ENCODE measurements at regions of chr10 and their contacts with region 1.

Region 1: GRCh38 chr10:112949875-112950507 is at the start of gene TCF7L2:
- DNase-seq: peak; percentile 97 to 98 (median 97)
- ATAC-seq: peak; percentile 93 to 96 (median 95)
- H3K4me3 ChIP-seq: peak within 1 kb of the TSS; percentile 61 to 91 (median 73)
- H3K27ac ChIP-seq: peak within 1 kb of the TSS; percentile 82 to 97 (median 90)
- H3K4me1 ChIP-seq: peaks cover 0 to 39% (median 26%) of the 10 kb centered on the region in 12 donors
- H3K27me3 ChIP-seq: no peaks in the 10 kb centered on the region
- CTCF ChIP-seq: no peak
- POLR2A ChIP-seq: peak in 1 of 2 donors; percentile 75
- total RNA-seq, gene TCF7L2: 5.9 to 17.5 (median 11.1) TPM

Region 2: GRCh38 chr10:112852306-112852705 is 97.7 kb before region 1 on chr10:
- intact Hi-C with region 1: no loop called
- DNase-seq: peak in 4 of 5 donors; percentile 26 to 57 (median 37)
- ATAC-seq: peak; percentile 42 to 78 (median 58)
- H3K4me3 ChIP-seq: no peak overlapping the region
- H3K27ac ChIP-seq: no peak overlapping the region
- H3K4me1 ChIP-seq: peaks cover 0 to 21% (median 0%) of the 10 kb centered on the region in 12 donors
- H3K27me3 ChIP-seq: no peaks in the 10 kb centered on the region
- CTCF ChIP-seq: no peak
- POLR2A ChIP-seq: no peak

Region 3: DNA sequence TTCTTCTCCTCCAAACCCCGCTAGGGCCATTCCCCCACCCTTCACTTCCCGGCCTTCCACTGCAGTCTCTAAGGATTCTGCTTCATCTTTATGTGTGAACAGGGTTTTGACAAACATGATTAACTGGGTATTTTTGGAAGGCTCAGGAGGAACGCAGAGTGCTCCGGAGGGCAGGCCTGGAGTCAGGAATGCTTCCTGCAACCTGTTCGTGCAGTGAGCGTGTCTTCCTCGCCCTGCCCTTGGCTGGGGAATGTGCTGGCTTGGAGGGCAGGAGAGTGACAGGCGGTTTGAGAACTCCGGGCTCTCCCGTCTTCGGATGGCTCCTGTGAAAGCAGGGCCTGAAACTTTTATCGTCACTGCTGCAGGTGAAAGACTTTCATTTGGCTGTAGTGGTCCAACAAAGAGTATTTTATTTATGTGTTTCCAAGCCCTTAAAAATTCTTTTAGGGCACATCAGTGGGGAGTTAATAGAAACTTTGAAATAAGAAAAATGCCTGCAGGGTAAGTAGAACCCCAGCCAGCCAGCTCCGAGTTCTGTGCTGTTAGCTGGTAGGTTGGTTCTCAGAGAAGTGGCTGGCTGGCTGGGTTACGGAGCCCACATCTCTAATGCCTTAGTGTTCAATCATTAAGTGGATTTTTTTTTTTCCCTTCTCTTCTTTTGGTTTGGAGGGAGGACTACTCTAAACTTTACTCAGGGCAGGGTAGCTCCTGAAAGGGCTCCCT is 51.0 kb after region 1 on chr10:
- intact Hi-C with region 1: loop called in 1 of 10 experiments (anchors 10 kb)
- DNase-seq: peak in 2 of 5 donors; percentile 62 to 70
- ATAC-seq: peak; percentile 59 to 90 (median 85)
- H3K4me3 ChIP-seq: peak overlapping the region in 1 of 12 donors; percentile 2
- H3K27ac ChIP-seq: peak overlapping the region in 10 of 12 donors; percentile 16 to 60 (median 33)
- H3K4me1 ChIP-seq: peaks cover 0 to 74% (median 40%) of the 10 kb centered on the region in 12 donors
- H3K27me3 ChIP-seq: no peaks in the 10 kb centered on the region
- CTCF ChIP-seq: peak in 5 of 12 donors; percentile 6 to 33 (median 18)
- POLR2A ChIP-seq: no peak

Region 4: GRCh38 chr10:113027574-113028455 is 77.8 kb after region 1 on chr10:
- intact Hi-C with region 1: loop called in 2 of 10 experiments (anchors 2 to 5 kb)
- DNase-seq: no peak
- ATAC-seq: peak; percentile 6 to 60 (median 42)
- H3K4me3 ChIP-seq: peak overlapping the region in 6 of 12 donors; percentile 0 to 13 (median 7)
- H3K27ac ChIP-seq: peak overlapping the region in 11 of 12 donors; percentile 7 to 56 (median 49)
- H3K4me1 ChIP-seq: peaks cover 3 to 46% (median 30%) of the 10 kb centered on the region in 12 donors
- H3K27me3 ChIP-seq: no peaks in the 10 kb centered on the region
- CTCF ChIP-seq: no peak
- POLR2A ChIP-seq: no peak

Region 5: GRCh38 chr10:113052076-113052830 is 102.3 kb after region 1 on chr10:
- intact Hi-C with region 1: loop called in 6 of 10 experiments (anchors 5 to 10 kb)
- DNase-seq: no peak
- ATAC-seq: peak in 2 of 4 donors; percentile 30 to 39
- H3K4me3 ChIP-seq: no peak overlapping the region
- H3K27ac ChIP-seq: peak overlapping the region in 2 of 12 donors; percentile 40 to 54
- H3K4me1 ChIP-seq: peaks cover 2 to 78% (median 37%) of the 10 kb centered on the region in 12 donors
- H3K27me3 ChIP-seq: no peaks in the 10 kb centered on the region
- CTCF ChIP-seq: peak in 9 of 12 donors; percentile 7 to 48 (median 21)
- POLR2A ChIP-seq: no peak

Region 6: GRCh38 chr10:113058523-113058961 is 108.6 kb after region 1 on chr10:
- intact Hi-C with region 1: loop called in 7 of 10 experiments (anchors 5 to 10 kb)
- DNase-seq: no peak
- ATAC-seq: peak in 1 of 4 donors; percentile 9
- H3K4me3 ChIP-seq: peak overlapping the region in 4 of 12 donors; percentile 18 to 37 (median 29)
- H3K27ac ChIP-seq: peak overlapping the region in 9 of 12 donors; percentile 11 to 81 (median 73)
- H3K4me1 ChIP-seq: peaks cover 0 to 79% (median 50%) of the 10 kb centered on the region in 12 donors
- H3K27me3 ChIP-seq: no peaks in the 10 kb centered on the region
- CTCF ChIP-seq: no peak
- POLR2A ChIP-seq: no peak

Region 7: GRCh38 chr10:113073549-113074189 is 123.7 kb after region 1 on chr10:
- intact Hi-C with region 1: loop called in 1 of 10 experiments (anchors 5 kb)
- DNase-seq: peak; percentile 50 to 84 (median 67)
- ATAC-seq: peak; percentile 21 to 84 (median 80)
- H3K4me3 ChIP-seq: peak overlapping the region in 2 of 12 donors; percentile 8 to 28
- H3K27ac ChIP-seq: peak overlapping the region in 10 of 12 donors; percentile 11 to 66 (median 46)
- H3K4me1 ChIP-seq: peaks cover 0 to 38% (median 25%) of the 10 kb centered on the region in 12 donors
- H3K27me3 ChIP-seq: no peaks in the 10 kb centered on the region
- CTCF ChIP-seq: no peak
- POLR2A ChIP-seq: no peak

Region 8: GRCh38 chr10:113126229-113127201 is 176.5 kb after region 1 on chr10:
- intact Hi-C with region 1: loop called in 9 of 10 experiments (anchors 2 to 10 kb)
- DNase-seq: peak; percentile 66 to 86 (median 72)
- ATAC-seq: peak; percentile 69 to 99 (median 94)
- H3K4me3 ChIP-seq: peak overlapping the region in 9 of 12 donors; percentile 20 to 59 (median 42)
- H3K27ac ChIP-seq: peak overlapping the region in 7 of 12 donors; percentile 12 to 74 (median 42)
- H3K4me1 ChIP-seq: peaks cover 0 to 24% (median 7%) of the 10 kb centered on the region in 12 donors
- H3K27me3 ChIP-seq: peaks cover 0 to 5% (median 0%) of the 10 kb centered on the region in 9 donors
- CTCF ChIP-seq: peak; percentile 37 to 94 (median 80)
- POLR2A ChIP-seq: no peak

Measured in heart left ventricle (tissue), 16 donors.